PC-3 (cell line): ENCODE measurements at regions of chr3 and their contacts with region 1.

Region 1: DNA sequence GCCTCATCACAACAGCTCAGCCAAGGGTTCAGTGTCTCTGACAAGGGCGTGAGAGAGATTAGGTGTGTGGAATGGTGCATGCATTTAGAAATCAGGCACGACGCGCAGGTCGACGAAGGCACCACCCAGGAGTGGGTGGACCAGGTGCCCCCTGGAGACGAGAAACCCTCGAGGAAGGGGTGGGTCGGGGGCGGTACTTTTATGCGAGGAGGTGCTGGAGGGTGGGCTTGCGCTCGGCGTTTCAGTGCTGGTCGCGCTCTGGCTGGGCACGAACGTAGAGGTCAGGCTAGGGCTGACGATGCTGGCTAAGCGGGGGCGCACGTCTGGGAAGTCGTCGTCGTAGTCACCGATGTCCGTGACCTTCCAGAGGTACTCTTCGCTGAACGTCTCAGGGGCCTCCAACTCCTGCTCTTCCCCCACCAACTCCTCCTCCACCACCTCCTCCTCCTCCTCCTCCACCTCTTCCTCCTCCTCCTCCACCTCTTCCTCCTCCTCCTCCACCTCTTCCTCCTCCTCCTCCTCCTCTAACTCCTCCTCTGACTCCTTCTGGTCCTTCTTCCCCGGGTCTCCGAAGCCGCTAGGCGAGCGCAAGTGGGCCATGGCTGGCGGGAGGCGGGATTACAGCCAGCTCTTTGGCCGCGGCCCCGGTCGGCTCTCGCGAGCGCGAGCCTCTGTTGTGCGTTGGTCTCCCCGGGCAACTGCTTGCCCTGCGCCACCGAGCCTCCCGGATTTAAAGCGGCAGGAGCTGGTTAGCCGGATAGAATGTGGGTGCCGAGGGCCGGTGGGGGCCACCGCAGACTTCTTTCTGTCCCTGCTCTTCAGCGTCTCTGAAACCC is at the start of gene ERICH6:
- DNase-seq: peak; percentile 92
- ATAC-seq: peak; percentile 97
- H3K4me3 ChIP-seq: peak within 1 kb of the TSS; percentile 88
- H3K27ac ChIP-seq: 0 out of 2 replicates have a peak within 1 kb of the TSS, but pooled peaks have one; percentile 15
- H3K4me1 ChIP-seq: peaks cover 12% of the 10 kb centered on the region
- H3K27me3 ChIP-seq: no peaks in the 10 kb centered on the region
- CTCF ChIP-seq: no peak
- total RNA-seq, gene ERICH6: not detected in 2 replicates

Region 2: DNA sequence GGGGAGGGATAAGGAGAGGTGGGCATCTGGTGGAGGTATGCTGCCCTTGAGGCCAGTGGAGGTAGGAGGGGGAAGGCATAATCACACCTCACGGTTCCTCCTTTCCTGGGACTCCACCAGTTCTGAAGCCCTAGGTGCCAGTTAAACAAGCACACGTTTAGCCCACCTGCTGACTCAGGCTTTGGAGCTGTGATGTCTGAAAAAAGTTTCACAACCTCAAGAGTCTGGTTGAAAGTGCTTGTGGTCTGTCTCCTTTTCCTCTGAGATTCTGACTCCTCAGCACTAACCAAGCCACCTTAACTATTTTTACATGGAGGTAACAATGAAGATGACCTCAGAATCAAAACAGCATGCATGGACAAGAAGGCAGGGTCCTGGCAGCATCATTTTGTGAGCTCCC is 1551.1 kb before region 1 on chr3:
- CTCF ChIA-PET with region 1: no interaction called
- POLR2A ChIA-PET with region 1: interaction called, 19 read pairs
- intact Hi-C with region 1: no loop called
- DNase-seq: no peak
- ATAC-seq: no peak
- H3K4me3 ChIP-seq: no peak overlapping the region
- H3K27ac ChIP-seq: no peak overlapping the region
- H3K4me1 ChIP-seq: peaks cover 9% of the 10 kb centered on the region; the same call in 1 of the 2 replicates
- H3K27me3 ChIP-seq: no peaks in the 10 kb centered on the region
- CTCF ChIP-seq: no peak

Region 3: GRCh38 chr3:150428562-150428961 is 275.0 kb before region 1 on chr3:
- CTCF ChIA-PET with region 1: no interaction called
- POLR2A ChIA-PET with region 1: interaction called, 13 read pairs
- intact Hi-C with region 1: no loop called
- DNase-seq: no peak
- ATAC-seq: no peak
- H3K4me3 ChIP-seq: no peak overlapping the region
- H3K27ac ChIP-seq: no peak overlapping the region
- H3K4me1 ChIP-seq: no peaks in the 10 kb centered on the region
- H3K27me3 ChIP-seq: no peaks in the 10 kb centered on the region
- CTCF ChIP-seq: no peak

Region 4: GRCh38 chr3:150603153-150603979 is 100.2 kb before region 1 on chr3 and contains the start of gene SELENOT:
- CTCF ChIA-PET with region 1: no interaction called
- POLR2A ChIA-PET with region 1: no interaction called
- intact Hi-C with region 1: loop called (anchors 5 kb)
- DNase-seq: peak; percentile 97
- ATAC-seq: peak; percentile 69
- H3K4me3 ChIP-seq: peak within 1 kb of the TSS; percentile 94
- H3K27ac ChIP-seq: peak within 1 kb of the TSS; percentile 85
- H3K4me1 ChIP-seq: peaks cover 42% of the 10 kb centered on the region
- H3K27me3 ChIP-seq: no peaks in the 10 kb centered on the region
- CTCF ChIP-seq: peak; percentile 40
- total RNA-seq, gene SELENOT: 109 and 119 TPM in 2 replicates

Region 5: DNA sequence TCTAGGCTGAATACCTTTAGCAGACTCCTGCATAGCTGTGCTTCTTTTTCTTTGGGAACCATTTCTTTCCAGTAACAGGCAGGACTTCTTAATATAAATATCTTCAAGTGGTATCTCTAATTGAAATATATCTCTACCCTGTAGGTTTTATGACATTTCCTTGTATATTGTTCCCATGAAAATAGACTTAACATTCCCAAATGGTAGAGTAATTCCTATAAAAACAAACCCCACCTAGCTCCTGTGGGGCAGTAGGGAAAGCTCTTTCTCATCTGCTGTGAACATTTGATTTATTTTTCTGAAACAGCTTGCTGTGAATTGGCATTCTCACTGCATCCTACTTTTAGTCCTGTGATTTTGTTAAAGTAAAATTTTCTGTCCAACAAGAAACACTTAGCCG is 79.6 kb before region 1 on chr3:
- CTCF ChIA-PET with region 1: no interaction called
- POLR2A ChIA-PET with region 1: no interaction called
- intact Hi-C with region 1: no loop called
- DNase-seq: peak; percentile 10
- ATAC-seq: peak; percentile 58
- H3K4me3 ChIP-seq: no peak overlapping the region
- H3K27ac ChIP-seq: no peak overlapping the region; the same call in 1 of the 2 replicates
- H3K4me1 ChIP-seq: peaks cover 7% of the 10 kb centered on the region
- H3K27me3 ChIP-seq: no peaks in the 10 kb centered on the region
- CTCF ChIP-seq: no peak

Region 6: GRCh38 chr3:150798122-150798626 is 94.7 kb after region 1 on chr3:
- CTCF ChIA-PET with region 1: no interaction called
- POLR2A ChIA-PET with region 1: no interaction called
- intact Hi-C with region 1: no loop called
- DNase-seq: no peak
- ATAC-seq: peak; percentile 51
- H3K4me3 ChIP-seq: no peak overlapping the region
- H3K27ac ChIP-seq: no peak overlapping the region
- H3K4me1 ChIP-seq: 0 out of 2 replicates have a peak, but pooled peaks cover 4% of the 10 kb centered on the region
- H3K27me3 ChIP-seq: peaks cover 35% of the 10 kb centered on the region
- CTCF ChIP-seq: no peak

Region 7: DNA sequence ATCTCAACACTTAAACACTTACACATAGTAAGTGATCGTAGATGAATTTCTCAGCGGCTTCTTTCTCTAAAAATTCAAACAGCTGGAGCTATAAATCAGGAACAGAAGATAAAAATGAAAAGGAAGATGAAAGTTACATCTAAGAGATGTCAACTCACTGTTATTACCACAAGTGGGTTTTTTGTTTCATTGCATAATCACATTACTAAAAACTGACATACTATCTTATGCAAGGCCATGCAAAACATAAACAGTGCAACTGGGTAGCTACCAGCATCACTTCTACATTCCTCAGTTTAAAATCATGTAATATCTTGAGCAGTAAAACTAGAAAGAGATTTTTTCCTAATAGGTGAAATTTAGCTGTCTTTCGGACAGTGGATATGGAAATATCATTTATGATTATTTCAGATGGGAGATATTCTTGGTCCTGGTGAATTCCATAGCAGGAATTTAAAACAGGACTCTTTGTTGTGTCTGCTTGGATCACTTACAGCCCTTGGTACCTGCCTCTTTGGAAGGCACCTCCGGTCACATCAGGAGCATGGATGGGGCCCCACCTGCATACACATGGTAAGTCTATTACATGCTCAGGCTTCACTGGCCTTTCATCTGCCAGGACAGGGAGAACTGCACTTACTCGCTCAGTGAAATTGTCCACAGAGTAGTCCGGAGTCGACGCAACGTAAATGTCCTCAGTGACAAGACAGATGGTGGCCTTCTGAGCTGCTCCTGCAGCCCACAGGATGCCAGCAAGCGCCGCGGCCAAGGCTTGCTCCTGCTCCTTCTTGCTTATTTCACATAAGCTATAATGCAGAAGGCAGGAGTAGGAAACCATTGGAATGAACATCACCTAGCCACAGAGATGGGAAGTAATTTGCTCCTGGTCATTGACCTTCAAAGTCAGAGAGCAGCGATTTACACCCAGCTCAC is 187.0 kb after region 1 on chr3:
- CTCF ChIA-PET with region 1: no interaction called
- POLR2A ChIA-PET with region 1: no interaction called
- intact Hi-C with region 1: no loop called
- DNase-seq: no peak
- ATAC-seq: no peak
- H3K4me3 ChIP-seq: no peak overlapping the region
- H3K27ac ChIP-seq: no peak overlapping the region
- H3K4me1 ChIP-seq: no peaks in the 10 kb centered on the region
- H3K27me3 ChIP-seq: peaks cover 67% of the 10 kb centered on the region
- CTCF ChIP-seq: no peak